Gastrocnemius medialis (tissue), 4 donors: ENCODE measurements at regions of chr5 and their contacts with region 1.

Region 1: GRCh38 chr5:154405078-154405792 is 40.6 kb upstream of the SAP30L start:
- DNase-seq: peak; percentile 53 to 62
- ATAC-seq: peak; percentile 84 to 90
- H3K4me3 ChIP-seq: peak overlapping the region; percentile 38 to 54 (median 44)
- H3K27ac ChIP-seq: no peak overlapping the region
- H3K4me1 ChIP-seq: peaks cover 0 to 3% of the 10 kb centered on the region in 2 donors
- H3K27me3 ChIP-seq: no peaks in the 10 kb centered on the region
- CTCF ChIP-seq: peak; percentile 78 to 89 (median 85)
- POLR2A ChIP-seq: no peak

Region 2: GRCh38 chr5:153974131-153974812 is 431.0 kb before region 1 on chr5:
- in situ Hi-C with region 1: no loop called
- intact Hi-C with region 1: loop called (anchors 10 kb)
- DNase-seq: no peak
- ATAC-seq: no peak
- H3K4me3 ChIP-seq: no peak overlapping the region
- H3K27ac ChIP-seq: no peak overlapping the region
- H3K4me1 ChIP-seq: no peaks in the 10 kb centered on the region
- H3K27me3 ChIP-seq: no peaks in the 10 kb centered on the region
- CTCF ChIP-seq: peak; percentile 29 to 56 (median 50)
- POLR2A ChIP-seq: no peak

Region 3: DNA sequence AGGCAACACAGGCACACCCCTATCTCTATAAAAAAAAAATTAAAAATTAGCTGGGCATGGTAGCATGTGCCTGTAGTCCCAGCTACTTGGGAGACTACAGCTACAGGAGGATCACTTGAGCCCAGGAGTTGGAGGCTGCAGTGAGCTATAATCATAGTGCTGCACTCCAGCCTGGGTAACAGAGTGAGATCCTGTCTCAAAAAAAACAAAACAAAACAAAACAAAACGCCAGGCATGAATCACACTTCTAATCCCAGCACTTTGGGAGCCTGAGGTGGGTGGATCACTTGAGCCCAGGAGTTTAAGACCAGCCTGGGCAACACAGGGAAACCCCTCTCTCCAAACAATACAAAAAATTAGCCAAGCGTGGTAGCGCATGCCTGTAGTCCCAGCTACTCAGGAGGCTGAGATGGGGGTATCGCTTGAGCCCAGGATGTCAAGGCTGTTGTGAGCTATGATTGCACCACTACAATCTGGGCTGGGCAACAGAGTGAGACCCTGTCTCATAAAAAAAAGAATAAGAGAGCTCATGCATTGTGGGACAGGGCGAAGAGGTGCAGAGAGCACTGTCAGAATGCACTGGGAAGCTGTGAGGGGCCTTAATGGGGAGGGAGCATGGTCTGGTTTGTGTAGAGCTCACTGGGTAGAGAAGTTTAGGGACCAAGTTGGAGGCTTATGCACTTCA is 32.2 kb after region 1 on chr5:
- in situ Hi-C with region 1: no loop called
- intact Hi-C with region 1: no loop called
- DNase-seq: no peak
- ATAC-seq: no peak
- H3K4me3 ChIP-seq: no peak overlapping the region
- H3K27ac ChIP-seq: no peak overlapping the region
- H3K4me1 ChIP-seq: no peaks in the 10 kb centered on the region
- H3K27me3 ChIP-seq: no peaks in the 10 kb centered on the region
- CTCF ChIP-seq: no peak
- POLR2A ChIP-seq: no peak